ENCODE measurements at regions of chr13 and their contacts with region 1.

Region 1: GRCh38 chr13:95156208-95156607 is 145.0 kb downstream of the ABCC4 start:
- DNase-seq: no peak
- H3K4me3 ChIP-seq: no peak overlapping the region
- CTCF ChIP-seq: no peak
- POLR2A ChIP-seq: no peak

Region 2: GRCh38 chr13:94674609-94675348 is 481.4 kb before region 1 on chr13:
- intact Hi-C with region 1: loop called (anchors 5 kb)
- DNase-seq: peak in 1 of 2 donors; percentile 29
- H3K4me3 ChIP-seq: no peak overlapping the region
- CTCF ChIP-seq: no peak
- POLR2A ChIP-seq: no peak

Region 3: DNA sequence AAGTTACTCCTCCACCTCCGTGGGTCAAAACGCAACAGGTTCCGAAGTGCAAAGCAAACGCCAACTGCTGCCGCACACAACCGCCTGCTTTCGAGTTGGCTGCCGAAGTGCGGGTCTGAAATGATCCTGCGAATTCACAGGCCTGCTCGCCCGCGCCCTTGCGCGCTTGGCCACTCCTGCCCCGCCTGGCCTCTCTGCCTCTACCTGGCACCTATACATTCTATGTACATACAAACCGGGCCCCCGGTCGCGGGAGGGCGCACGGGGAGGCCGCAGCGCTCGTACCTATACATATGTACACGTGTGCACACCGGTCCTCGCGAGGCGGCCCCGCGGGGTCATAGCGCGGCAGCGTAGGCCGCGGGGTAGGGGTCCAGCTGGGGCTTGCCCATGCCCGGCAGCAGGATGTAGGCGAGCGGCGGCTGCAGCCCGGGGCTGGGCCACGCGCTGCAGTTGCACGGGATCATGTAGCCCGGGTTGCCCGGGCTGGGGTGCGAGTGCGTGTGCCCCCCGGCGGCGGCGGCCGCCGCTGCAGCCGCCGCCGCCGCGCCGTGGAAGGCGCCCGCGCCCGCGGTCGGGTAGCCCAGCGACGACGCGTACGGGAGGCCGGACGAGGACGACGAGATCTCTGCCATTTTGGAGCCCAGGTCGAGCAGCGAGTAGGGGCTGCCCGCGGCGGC is 445.2 kb before region 1 on chr13:
- intact Hi-C with region 1: loop called (anchors 10 kb)
- DNase-seq: no peak
- H3K4me3 ChIP-seq: peak overlapping the region; percentile 16
- CTCF ChIP-seq: no peak
- POLR2A ChIP-seq: no peak